ENCODE measurements at regions of chr7 and their contacts with region 1.

Region 1: DNA sequence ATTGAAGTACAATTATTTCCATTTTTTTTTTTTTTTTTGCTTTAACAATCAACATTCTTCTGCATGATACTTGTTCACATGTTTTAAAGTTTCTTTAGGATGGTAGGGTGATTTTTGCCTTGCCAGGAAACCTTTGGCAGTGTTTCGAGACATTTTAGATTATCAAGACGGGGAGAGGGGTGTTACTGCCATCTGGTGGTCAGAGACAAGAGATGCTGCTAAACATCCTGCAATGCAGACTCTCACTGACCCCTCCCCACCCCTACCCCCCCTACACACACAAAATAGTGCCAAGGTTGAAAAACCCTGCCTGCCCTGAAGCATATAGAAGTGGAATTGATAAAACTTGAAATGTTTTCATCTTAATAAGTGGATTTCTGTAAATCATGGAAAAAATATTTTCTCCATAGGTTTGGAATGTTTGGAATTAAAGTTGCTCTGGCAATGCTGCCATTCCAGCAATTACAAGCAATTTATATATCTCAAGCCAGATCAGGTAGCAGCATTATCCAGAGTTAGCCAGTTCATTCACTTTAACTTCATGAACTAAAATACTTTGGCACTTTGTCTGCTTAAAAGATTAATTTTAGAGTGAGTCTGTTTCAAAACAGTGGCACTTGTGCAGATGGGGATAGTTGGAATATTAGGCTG is 62.1 kb downstream of the SDHAF3 start:
- DNase-seq: no peak
- ATAC-seq: peak; percentile 79
- H3K4me3 Mint-ChIP-seq: no peak overlapping the region
- H3K27ac Mint-ChIP-seq: no peak overlapping the region
- H3K4me1 Mint-ChIP-seq: peaks cover 6% of the 10 kb centered on the region
- H3K27me3 Mint-ChIP-seq: no peaks in the 10 kb centered on the region
- CTCF ChIP-seq: peak; percentile 63

Region 2: DNA sequence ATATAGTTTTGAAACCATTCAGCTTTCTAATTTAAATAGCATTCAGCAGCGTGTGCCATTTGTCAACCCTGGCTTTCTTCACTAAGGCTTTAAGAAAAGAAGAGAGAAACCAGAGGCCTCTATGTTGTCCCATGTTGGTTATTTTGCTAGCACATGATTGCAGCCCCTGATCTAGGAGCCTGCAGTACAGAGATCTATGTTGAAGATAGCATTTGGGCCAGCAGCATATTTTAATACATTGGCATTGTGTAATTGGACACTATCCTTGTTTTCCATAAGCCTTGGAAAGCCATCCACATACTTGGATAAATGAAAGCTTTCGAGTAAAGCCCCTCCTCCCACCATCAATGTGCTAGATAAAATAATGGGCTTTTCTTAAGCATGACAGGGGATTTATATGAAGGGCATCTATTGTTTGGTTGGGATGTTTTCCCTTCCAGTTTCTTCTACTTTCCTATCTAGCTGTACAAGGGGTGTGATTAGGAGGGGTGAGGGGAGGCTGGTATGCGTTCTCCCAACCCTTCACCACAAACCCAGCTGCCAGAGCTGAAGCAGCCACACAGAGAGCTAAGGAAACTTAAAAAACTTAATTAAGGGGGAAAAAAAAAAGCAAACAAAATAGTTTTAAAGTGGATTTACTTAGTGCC is 85.2 kb before region 1 on chr7:
- CTCF ChIA-PET with region 1: no interaction called
- POLR2A ChIA-PET with region 1: no interaction called
- intact Hi-C with region 1: no loop called
- DNase-seq: no peak
- ATAC-seq: no peak
- H3K4me3 Mint-ChIP-seq: no peak overlapping the region
- H3K27ac Mint-ChIP-seq: no peak overlapping the region
- H3K4me1 Mint-ChIP-seq: no peaks in the 10 kb centered on the region
- H3K27me3 Mint-ChIP-seq: peaks cover 6% of the 10 kb centered on the region
- CTCF ChIP-seq: no peak

Region 3: GRCh38 chr7:97145068-97145467 is 34.5 kb before region 1 on chr7:
- CTCF ChIA-PET with region 1: no interaction called
- POLR2A ChIA-PET with region 1: no interaction called
- intact Hi-C with region 1: loop called (anchors 1 kb)
- DNase-seq: no peak
- ATAC-seq: no peak
- H3K4me3 Mint-ChIP-seq: no peak overlapping the region
- H3K27ac Mint-ChIP-seq: no peak overlapping the region
- H3K4me1 Mint-ChIP-seq: no peaks in the 10 kb centered on the region
- H3K27me3 Mint-ChIP-seq: no peaks in the 10 kb centered on the region
- CTCF ChIP-seq: no peak

Region 4: GRCh38 chr7:97466071-97466470 is 286.5 kb after region 1 on chr7:
- CTCF ChIA-PET with region 1: no interaction called
- POLR2A ChIA-PET with region 1: no interaction called
- intact Hi-C with region 1: no loop called
- DNase-seq: no peak
- ATAC-seq: no peak
- H3K4me3 Mint-ChIP-seq: no peak overlapping the region
- H3K27ac Mint-ChIP-seq: no peak overlapping the region
- H3K4me1 Mint-ChIP-seq: no peaks in the 10 kb centered on the region
- H3K27me3 Mint-ChIP-seq: peaks cover 5% of the 10 kb centered on the region
- CTCF ChIP-seq: no peak

Measured in activated B cell treated with CpG ODN at 0.5 μM for 24 hours (primary cell).